Sigmoid colon (tissue), 7 donors: ENCODE measurements at regions of chr1 and their contacts with region 1.

Region 1: DNA sequence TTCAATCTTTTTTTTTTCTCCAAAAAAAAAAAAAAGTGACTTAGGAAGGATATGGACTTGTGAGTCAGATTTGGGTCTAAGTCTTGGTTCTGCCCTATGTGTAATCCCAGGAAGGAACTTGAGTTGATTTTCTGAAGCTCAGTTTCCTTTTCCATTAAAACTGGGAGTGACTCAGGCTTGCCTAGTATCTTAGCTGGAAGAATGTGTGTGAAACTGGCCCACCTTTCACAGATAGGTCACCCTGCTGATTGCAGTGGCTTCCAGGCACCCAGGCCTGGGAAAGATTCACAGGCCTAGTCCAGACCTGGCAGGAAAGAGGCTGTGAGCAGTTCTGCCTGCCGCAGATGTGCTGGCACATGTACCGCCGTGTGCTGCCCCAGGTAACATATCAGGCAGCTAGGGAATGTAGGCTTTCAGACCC is 218.3 kb upstream of the HOOK1 start:
- DNase-seq: no peak
- H3K4me3 ChIP-seq: no peak overlapping the region
- H3K27ac ChIP-seq: peak overlapping the region; percentile 82 to 87 (median 82)
- H3K4me1 ChIP-seq: peaks cover 0 to 81% (median 61%) of the 10 kb centered on the region in 4 donors
- H3K27me3 ChIP-seq: no peaks in the 10 kb centered on the region
- CTCF ChIP-seq: no peak
- EP300 ChIP-seq: no peak
- POLR2A ChIP-seq: no peak

Region 2: GRCh38 chr1:59682396-59683080 is 86.1 kb after region 1 on chr1:
- intact Hi-C with region 1: loop called (anchors 5 kb)
- DNase-seq: peak; percentile 77
- H3K4me3 ChIP-seq: no peak overlapping the region
- H3K27ac ChIP-seq: peak overlapping the region; percentile 73 to 83 (median 79)
- H3K4me1 ChIP-seq: peaks cover 0 to 62% (median 33%) of the 10 kb centered on the region in 4 donors
- H3K27me3 ChIP-seq: no peaks in the 10 kb centered on the region
- CTCF ChIP-seq: no peak
- EP300 ChIP-seq: peak; percentile 41 to 91 (median 71)
- POLR2A ChIP-seq: no peak

Region 3: DNA sequence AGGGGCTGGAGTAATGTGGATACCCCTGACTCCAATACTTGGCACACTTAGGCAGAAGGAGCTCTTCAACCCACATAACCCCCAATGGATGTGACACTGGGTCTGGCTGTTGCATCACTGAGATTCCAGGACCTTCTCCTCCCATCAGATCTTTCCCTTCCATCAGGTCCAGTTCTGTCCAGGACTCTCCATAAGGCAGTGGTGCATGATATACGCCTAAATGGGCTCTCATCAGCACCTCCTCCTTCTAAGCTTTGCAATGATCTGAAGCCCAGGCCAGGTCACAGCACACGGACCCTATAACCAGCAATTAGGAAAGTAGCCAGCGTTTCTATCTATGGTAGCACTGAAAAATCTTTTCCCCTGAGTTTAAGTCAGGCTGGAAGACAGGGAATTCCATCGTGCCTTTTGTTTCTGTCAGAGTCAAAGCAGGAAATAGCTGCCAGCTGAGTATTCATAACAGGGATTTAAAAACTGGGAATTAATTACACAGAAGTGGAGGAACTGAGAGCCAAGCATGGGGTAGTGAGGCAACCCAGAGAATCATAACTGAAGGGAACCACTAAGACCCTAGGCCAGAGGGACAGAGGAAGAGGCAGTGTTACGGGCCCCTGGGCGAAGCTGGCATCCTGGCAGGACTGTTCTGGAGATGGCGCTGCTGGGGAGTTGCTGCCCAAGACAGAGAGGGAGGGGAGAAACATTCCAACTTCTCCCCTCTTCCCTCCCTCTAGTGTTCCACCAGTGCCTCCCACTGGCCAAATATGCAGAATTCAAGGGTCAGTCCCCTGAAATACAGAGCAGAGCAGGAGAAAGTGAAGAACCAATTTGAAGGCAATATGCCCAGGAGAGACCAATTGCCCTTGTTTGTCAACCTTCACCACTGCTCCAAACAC is 180.8 kb after region 1 on chr1:
- intact Hi-C with region 1: no loop called
- DNase-seq: no peak
- H3K4me3 ChIP-seq: no peak overlapping the region
- H3K27ac ChIP-seq: no peak overlapping the region
- H3K4me1 ChIP-seq: peaks cover 0 to 3% (median 0%) of the 10 kb centered on the region in 4 donors
- H3K27me3 ChIP-seq: no peaks in the 10 kb centered on the region
- CTCF ChIP-seq: no peak
- EP300 ChIP-seq: no peak
- POLR2A ChIP-seq: no peak